H1 (cell line): ENCODE measurements at regions of chr13 and their contacts with region 1.

Region 1: DNA sequence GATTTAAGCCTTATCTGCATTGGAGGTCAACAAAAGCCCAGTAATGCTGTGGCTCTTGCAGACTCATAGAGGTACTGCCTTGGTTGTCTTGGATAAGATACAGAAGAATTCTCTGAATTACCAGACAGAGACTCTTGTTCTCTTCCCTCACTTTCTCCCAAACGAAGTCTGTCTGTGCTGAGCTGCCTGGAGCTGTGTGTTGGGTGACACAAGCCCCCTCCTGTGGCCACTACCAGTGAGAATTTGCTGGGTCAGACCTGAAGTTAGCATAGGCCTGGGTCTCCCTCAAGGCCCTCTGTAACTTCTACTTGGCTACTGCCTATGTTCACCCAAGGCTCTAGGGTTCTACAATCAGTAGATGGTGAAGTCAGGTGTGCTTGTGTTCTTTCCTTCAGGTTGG is 413.0 kb downstream of the PCDH20 start:
- DNase-seq: no peak
- H3K4me3 ChIP-seq: no peak overlapping the region
- H3K27ac ChIP-seq: no peak overlapping the region
- H3K4me1 ChIP-seq: peaks cover 0 to 5% (median under 1%) of the 10 kb centered on the region in 4 experiments; a peak in 1 of 7 replicates
- H3K27me3 ChIP-seq: no peaks in the 10 kb centered on the region
- CTCF ChIP-seq: peak; percentile 5 to 13 (median 7); a peak in 3 of 4 replicates
- EP300 ChIP-seq: no peak
- POLR2A ChIP-seq: no peak
- RAD21 ChIP-seq: peak; percentile 21 to 46; a peak in 3 of 4 replicates

Region 2: GRCh38 chr13:60974296-60974695 is 28.4 kb before region 1 on chr13:
- CTCF ChIA-PET with region 1: no interaction called
- POLR2A ChIA-PET with region 1: no interaction called
- DNase-seq: no peak
- H3K4me3 ChIP-seq: no peak overlapping the region
- H3K27ac ChIP-seq: no peak overlapping the region
- H3K4me1 ChIP-seq: peaks cover 0 to 4% (median 1%) of the 10 kb centered on the region in 4 experiments; a peak in 2 of 7 replicates
- H3K27me3 ChIP-seq: no peaks in the 10 kb centered on the region
- CTCF ChIP-seq: no peak
- EP300 ChIP-seq: no peak
- POLR2A ChIP-seq: no peak
- RAD21 ChIP-seq: no peak

Region 3: DNA sequence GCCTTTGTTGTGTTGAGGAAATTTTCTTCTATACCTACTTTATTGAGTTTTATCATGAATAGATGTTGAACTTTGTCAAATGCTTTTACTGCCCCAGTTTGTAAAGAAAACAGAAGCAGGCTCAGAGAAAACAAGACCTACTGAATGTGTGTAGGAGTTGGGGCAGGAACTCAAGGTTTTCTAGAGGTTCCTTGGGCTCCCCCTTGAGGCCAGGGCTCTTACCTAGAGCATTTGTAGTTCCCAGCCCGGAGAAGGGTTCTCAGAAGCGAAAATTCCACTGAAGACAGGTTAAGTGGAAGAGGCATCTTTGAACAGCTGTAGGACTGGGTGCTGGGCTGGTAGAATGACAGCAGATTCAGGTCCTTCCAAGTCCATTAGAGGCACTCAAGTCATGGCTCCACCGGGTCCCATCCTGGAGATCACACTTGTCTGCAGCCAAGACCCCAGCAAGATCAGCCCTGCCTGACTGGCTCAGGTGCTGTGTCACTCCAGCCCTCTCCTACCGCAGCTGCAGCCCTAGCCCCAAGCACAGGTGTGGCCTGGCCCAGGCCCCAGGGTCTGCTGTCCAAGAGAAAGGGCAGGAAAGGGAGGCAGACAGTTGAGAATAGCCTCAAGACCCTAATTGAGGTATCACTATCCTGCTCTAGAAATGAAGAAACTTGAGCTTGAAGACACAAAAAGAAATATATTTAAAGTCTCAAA is 12.5 kb before region 1 on chr13:
- CTCF ChIA-PET with region 1: interaction called, 21 read pairs
- POLR2A ChIA-PET with region 1: no interaction called
- DNase-seq: peak; percentile 23 to 60
- H3K4me3 ChIP-seq: no peak overlapping the region
- H3K27ac ChIP-seq: no peak overlapping the region
- H3K4me1 ChIP-seq: no peaks in the 10 kb centered on the region
- H3K27me3 ChIP-seq: no peaks in the 10 kb centered on the region
- CTCF ChIP-seq: peak; percentile 8 to 62 (median 55)
- EP300 ChIP-seq: no peak
- POLR2A ChIP-seq: no peak
- RAD21 ChIP-seq: peak; percentile 64 to 76